ENCODE measurements at regions of chr9 and their contacts with region 1.

Region 1: DNA sequence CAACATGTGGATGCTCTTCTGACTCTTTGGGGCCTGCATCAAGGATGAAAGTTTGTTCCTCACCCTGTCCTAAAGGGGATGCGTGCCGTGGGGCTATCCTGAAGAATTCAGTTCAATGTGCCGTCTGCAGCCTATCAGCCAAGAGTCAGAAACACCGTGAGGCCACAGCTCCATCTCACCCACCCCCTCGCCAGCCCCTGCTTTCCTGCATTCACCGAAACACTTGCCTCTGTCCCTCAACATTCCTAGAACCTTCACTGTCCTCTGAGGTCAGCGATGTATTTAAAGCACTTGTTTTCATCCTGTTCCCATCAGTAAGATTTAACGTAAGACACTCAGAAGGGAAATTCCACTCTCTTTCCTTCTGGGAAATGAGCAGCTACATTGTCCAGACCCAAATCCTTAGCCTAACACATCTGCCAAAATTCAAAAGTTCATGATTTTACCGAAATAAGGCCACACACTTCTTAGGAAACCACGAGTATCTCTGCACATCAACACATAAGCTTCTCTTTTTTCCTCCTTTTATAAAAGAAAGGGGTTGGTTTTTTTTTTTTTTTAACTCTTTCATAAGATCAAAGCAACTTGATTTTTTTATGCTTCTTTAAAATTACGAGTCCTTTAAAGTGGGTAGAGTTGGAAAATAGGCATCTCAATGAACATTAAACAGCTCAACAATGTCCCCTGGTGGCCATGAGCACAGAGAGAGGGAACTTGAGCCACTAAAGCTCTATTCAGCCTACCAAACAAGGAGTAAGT is 100.7 kb downstream of the SUSD1 start:
- DNase-seq: peak; percentile 85
- ATAC-seq: peak; percentile 88
- H3K4me3 Mint-ChIP-seq: no peak overlapping the region
- H3K27ac Mint-ChIP-seq: peak overlapping the region; percentile 60
- H3K4me1 Mint-ChIP-seq: peaks cover 34% of the 10 kb centered on the region
- H3K27me3 Mint-ChIP-seq: no peaks in the 10 kb centered on the region

Region 2: DNA sequence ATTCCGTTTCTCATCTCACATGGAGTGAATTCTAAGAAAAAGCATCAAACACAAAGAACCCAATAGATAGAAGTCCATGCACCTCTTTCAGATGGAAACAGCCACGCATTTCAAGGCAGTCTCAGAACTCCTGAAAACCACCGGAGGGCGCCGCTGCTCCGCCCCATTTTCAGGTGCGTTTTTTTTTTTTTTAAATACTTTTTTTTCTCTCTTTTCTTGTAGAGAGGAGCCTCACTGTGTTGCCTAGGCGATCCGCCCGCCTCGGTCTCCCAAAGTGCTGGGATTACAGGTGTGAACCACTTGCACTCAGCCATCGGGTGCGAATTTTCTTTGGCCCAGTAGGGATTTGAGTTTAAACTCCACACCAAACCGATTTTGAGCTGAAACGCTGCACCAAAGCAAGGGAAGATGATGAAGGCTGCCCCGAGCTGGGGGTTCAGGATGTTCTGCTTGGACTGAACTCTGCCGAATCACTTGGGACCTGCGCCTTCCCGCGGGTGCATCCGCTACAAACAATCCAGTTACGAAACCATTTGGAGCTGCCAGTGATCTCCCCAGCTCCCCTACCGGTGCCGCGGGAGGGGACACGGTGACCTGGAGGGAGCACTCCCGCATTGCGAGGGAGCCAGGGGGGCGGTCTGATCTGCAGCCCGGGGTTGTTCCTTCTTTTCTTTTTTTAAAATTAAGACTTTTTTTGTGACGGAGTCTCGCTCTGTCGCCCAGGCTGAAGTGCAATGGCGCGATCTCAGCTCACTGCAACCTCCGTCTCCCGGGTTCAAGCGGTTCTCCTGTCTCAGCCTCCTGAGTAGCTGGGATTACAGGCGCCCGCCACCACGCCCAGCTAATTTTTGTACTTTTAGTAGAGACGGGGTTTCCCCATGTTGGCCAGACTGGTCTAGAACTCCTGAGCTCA is 476.4 kb before region 1 on chr9:
- CTCF ChIA-PET with region 1: interaction called, 10 read pairs
- POLR2A ChIA-PET with region 1: no interaction called
- DNase-seq: peak; percentile 68
- ATAC-seq: peak; percentile 68
- H3K4me3 Mint-ChIP-seq: peak overlapping the region; percentile 74
- H3K27ac Mint-ChIP-seq: no peak overlapping the region
- H3K4me1 Mint-ChIP-seq: peaks cover 22% of the 10 kb centered on the region
- H3K27me3 Mint-ChIP-seq: peaks cover 40% of the 10 kb centered on the region

Region 3: GRCh38 chr9:111759762-111760639 is 314.4 kb before region 1 on chr9:
- CTCF ChIA-PET with region 1: interaction called, 79 read pairs
- POLR2A ChIA-PET with region 1: no interaction called
- DNase-seq: peak; percentile 74
- ATAC-seq: peak; percentile 75
- H3K4me3 Mint-ChIP-seq: no peak overlapping the region
- H3K27ac Mint-ChIP-seq: no peak overlapping the region
- H3K4me1 Mint-ChIP-seq: peaks cover 2% of the 10 kb centered on the region
- H3K27me3 Mint-ChIP-seq: no peaks in the 10 kb centered on the region

Region 4: DNA sequence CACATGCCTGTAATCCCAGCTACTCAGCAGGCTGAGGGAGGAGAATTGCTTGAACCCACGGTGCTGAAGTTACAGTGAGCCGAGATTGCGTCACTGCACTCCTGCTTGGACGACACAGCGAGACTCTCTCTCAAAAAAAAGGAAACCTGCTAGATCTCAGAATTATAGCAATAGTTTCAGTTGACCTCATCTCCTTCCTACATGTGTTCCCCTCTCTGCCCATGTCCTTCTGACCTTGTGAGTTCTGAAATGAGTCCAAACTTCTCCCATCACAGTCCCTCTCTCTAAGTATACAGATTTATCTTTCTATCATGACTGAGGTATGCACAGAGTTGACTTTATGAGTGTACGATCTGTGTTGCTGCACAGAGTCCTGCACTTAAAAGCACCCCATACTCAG is 235.0 kb before region 1 on chr9:
- CTCF ChIA-PET with region 1: no interaction called
- POLR2A ChIA-PET with region 1: no interaction called
- DNase-seq: no peak
- ATAC-seq: no peak
- H3K4me3 Mint-ChIP-seq: no peak overlapping the region
- H3K27ac Mint-ChIP-seq: no peak overlapping the region
- H3K4me1 Mint-ChIP-seq: no peaks in the 10 kb centered on the region
- H3K27me3 Mint-ChIP-seq: peaks cover 18% of the 10 kb centered on the region

Region 5: DNA sequence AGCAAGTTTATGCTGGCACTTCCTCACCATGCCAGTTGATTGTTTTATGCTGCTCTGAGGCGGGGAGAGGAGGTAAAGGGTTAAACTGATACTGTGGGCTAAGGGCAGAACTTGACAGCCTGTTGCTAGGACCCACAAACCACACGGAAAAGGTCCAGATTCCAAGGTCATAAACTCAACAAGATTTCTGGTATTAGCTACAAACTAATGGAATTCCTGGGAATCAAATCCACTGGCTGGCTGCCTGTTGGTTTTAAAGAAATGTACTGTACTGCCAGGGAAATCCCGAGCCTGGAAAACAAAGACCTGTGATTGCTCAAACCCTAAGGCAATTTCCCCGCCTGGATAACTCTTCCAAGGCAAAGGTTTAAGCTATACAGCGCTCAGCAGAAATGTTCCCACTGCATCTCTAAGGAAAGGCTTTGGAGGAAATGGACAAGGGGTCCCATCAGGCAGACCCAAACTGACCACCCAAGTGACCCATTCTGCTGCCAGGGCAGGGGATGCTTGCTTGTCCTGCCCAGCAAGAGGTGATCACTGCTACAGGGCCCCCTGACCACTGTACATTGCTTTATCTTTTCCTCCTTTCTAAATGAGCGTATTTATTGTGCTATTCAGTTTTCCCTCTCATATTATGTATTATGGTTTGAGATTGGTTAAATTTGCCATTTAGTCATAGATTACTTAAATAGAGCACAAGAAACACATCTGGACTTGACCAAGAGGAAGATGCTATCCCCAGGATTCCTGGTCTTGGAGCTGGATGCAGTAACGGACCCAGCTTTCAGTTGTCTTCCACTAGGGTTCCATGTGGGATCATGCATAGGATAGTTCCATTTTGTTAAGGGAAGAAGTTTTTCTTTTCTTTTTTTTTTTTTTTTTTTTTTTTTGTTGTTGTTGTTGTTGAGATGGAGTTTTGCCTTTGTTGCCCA is 23.6 kb before region 1 on chr9:
- CTCF ChIA-PET with region 1: interaction called, 16 read pairs
- POLR2A ChIA-PET with region 1: no interaction called
- DNase-seq: no peak
- ATAC-seq: no peak
- H3K4me3 Mint-ChIP-seq: no peak overlapping the region
- H3K27ac Mint-ChIP-seq: no peak overlapping the region
- H3K4me1 Mint-ChIP-seq: peaks cover 13% of the 10 kb centered on the region
- H3K27me3 Mint-ChIP-seq: no peaks in the 10 kb centered on the region

Region 6: GRCh38 chr9:112061152-112061740 is 13.2 kb before region 1 on chr9:
- CTCF ChIA-PET with region 1: interaction called, 10 read pairs
- POLR2A ChIA-PET with region 1: no interaction called
- DNase-seq: peak; percentile 67
- ATAC-seq: peak; percentile 86
- H3K4me3 Mint-ChIP-seq: no peak overlapping the region
- H3K27ac Mint-ChIP-seq: peak overlapping the region; percentile 77
- H3K4me1 Mint-ChIP-seq: peaks cover 36% of the 10 kb centered on the region
- H3K27me3 Mint-ChIP-seq: no peaks in the 10 kb centered on the region

Region 7: DNA sequence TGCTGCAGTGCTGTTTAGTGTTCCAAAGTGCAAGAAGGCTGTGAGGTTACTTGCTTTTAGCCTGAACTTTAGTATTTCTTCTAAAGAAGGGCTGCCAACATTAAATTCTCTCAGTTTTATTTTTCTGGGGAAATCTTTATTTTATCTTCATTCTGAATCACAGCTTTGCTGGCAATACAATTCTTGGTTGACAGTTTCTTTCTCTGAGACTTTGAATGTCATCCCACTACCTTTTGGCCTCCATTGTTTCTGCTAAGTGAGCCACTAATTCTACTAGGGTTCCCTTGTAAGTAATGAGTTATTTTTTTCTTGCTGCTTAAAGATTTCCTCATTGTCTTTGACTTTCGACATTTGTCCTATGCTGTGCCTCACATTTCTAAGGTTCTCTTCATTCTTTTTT is 133.0 kb after region 1 on chr9:
- CTCF ChIA-PET with region 1: no interaction called
- POLR2A ChIA-PET with region 1: no interaction called
- DNase-seq: no peak
- ATAC-seq: no peak
- H3K4me3 Mint-ChIP-seq: no peak overlapping the region
- H3K27ac Mint-ChIP-seq: no peak overlapping the region
- H3K4me1 Mint-ChIP-seq: no peaks in the 10 kb centered on the region
- H3K27me3 Mint-ChIP-seq: no peaks in the 10 kb centered on the region

Region 8: DNA sequence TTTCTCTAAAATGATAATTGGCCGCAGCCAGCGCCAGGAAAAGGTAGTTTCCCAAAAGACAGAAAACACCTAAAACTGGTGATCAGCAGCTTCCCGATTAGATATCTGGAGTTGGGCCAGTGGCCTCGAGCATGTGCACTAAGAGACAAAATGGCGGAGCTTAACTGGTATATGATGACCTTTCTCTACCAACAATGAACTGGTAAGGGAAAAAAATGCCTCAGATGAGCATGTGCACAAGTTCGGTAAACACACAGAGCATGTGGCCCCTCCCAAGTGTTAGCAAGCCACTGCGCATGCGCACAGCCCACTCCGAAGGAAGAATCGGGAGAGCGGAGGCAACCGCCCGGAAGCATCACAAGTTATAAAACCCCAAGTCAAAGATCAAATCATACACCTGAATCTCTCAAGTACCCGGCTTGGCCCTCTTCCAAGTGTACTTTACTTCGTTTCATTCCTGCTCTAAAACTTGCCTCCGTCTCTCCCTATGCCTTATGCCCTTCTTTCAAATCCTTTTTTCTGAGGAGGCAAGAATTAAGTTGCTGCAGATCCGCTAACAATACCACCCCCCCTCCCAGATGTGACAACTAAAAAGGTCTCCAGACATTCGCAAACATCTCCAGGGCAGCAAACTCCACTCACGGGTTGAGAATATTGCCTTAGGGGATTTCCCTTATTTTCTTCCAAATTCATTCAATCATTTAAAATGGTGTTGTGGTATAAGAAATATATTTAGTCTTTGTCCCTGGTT is 274.0 kb after region 1 on chr9:
- CTCF ChIA-PET with region 1: no interaction called
- POLR2A ChIA-PET with region 1: no interaction called
- DNase-seq: peak; percentile 77
- ATAC-seq: peak; percentile 55
- H3K4me3 Mint-ChIP-seq: peak overlapping the region; percentile 72
- H3K27ac Mint-ChIP-seq: peak overlapping the region; percentile 80
- H3K4me1 Mint-ChIP-seq: peaks cover 13% of the 10 kb centered on the region
- H3K27me3 Mint-ChIP-seq: peaks cover 2% of the 10 kb centered on the region